ENCODE measurements at regions of chr11 and their contacts with region 1.

Region 1: GRCh38 chr11:82494988-82495432 is 238.7 kb downstream of the FAM181B start:
- DNase-seq: peak; percentile 42
- H3K4me3 Mint-ChIP-seq: no peak overlapping the region
- H3K27ac Mint-ChIP-seq: no peak overlapping the region
- H3K4me1 Mint-ChIP-seq: no peaks in the 10 kb centered on the region
- H3K27me3 Mint-ChIP-seq: peaks cover 28% of the 10 kb centered on the region
- CTCF ChIP-seq: peak; percentile 25

Region 2: GRCh38 chr11:82315093-82315492 is 179.9 kb before region 1 on chr11:
- CTCF ChIA-PET with region 1: no interaction called
- POLR2A ChIA-PET with region 1: no interaction called
- intact Hi-C with region 1: loop called (anchors 10 kb)
- DNase-seq: peak; percentile 55
- H3K4me3 Mint-ChIP-seq: no peak overlapping the region
- H3K27ac Mint-ChIP-seq: no peak overlapping the region
- H3K4me1 Mint-ChIP-seq: no peaks in the 10 kb centered on the region
- H3K27me3 Mint-ChIP-seq: peaks cover 36% of the 10 kb centered on the region
- CTCF ChIP-seq: peak; percentile 35

Region 3: GRCh38 chr11:82682003-82682751 is 187.2 kb after region 1 on chr11:
- CTCF ChIA-PET with region 1: interaction called, 12 read pairs
- POLR2A ChIA-PET with region 1: no interaction called
- intact Hi-C with region 1: no loop called
- DNase-seq: peak; percentile 80
- H3K4me3 Mint-ChIP-seq: no peak overlapping the region
- H3K27ac Mint-ChIP-seq: no peak overlapping the region
- H3K4me1 Mint-ChIP-seq: peaks cover 7% of the 10 kb centered on the region
- H3K27me3 Mint-ChIP-seq: peaks cover 42% of the 10 kb centered on the region
- CTCF ChIP-seq: peak; percentile 52